Activated naive CD4-positive, alpha-beta T cell treated with anti-CD3 and anti-CD28 coated beads for 36 hours (primary cell): ENCODE measurements at regions of chr19 and their contacts with region 1.

Region 1: GRCh38 chr19:34096020-34096915 is 76.0 kb upstream of the LSM14A start:
- DNase-seq: no peak
- H3K4me3 Mint-ChIP-seq: no peak overlapping the region
- H3K27ac Mint-ChIP-seq: no peak overlapping the region
- H3K4me1 Mint-ChIP-seq: peaks cover 2% of the 10 kb centered on the region
- H3K27me3 Mint-ChIP-seq: peaks cover 4% of the 10 kb centered on the region

Region 2: GRCh38 chr19:34041925-34042521 is 54.2 kb before region 1 on chr19:
- CTCF ChIA-PET with region 1: interaction called, 29 read pairs
- intact Hi-C with region 1: loop called (anchors 1 kb)
- DNase-seq: peak; percentile 90
- H3K4me3 Mint-ChIP-seq: no peak overlapping the region
- H3K27ac Mint-ChIP-seq: no peak overlapping the region
- H3K4me1 Mint-ChIP-seq: peaks cover 2% of the 10 kb centered on the region
- H3K27me3 Mint-ChIP-seq: peaks cover 5% of the 10 kb centered on the region